ENCODE measurements at regions of chr1 and their contacts with region 1.

Region 1: DNA sequence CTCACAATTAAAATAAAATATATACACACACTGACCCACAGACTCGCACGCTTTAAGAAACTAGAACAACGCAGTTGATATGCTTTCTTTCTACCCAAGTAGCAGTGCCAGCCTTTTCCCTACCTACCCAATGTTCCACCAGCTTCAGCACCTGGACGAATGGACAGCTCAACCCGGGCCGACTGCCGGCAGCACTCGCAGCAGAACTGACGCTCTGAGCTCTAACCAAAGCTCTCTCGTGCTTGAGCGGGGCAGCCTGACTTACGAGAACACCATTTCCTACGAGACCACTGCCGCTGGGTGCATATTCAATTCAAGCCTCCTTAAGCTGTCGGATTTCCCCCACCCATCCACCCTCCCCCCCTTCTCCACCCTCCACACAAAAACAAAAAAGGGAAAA is 127.4 kb upstream of the DPYD start:
- DNase-seq: peak; percentile 79
- H3K4me3 Mint-ChIP-seq: no peak overlapping the region
- H3K27ac Mint-ChIP-seq: no peak overlapping the region
- H3K4me1 Mint-ChIP-seq: peaks cover 40% of the 10 kb centered on the region
- H3K27me3 Mint-ChIP-seq: peaks cover 88% of the 10 kb centered on the region

Region 2: GRCh38 chr1:97726383-97726782 is 321.9 kb before region 1 on chr1:
- CTCF ChIA-PET with region 1: no interaction called
- POLR2A ChIA-PET with region 1: interaction called, 12 read pairs
- DNase-seq: no peak
- H3K4me3 Mint-ChIP-seq: no peak overlapping the region
- H3K27ac Mint-ChIP-seq: no peak overlapping the region
- H3K4me1 Mint-ChIP-seq: no peaks in the 10 kb centered on the region
- H3K27me3 Mint-ChIP-seq: no peaks in the 10 kb centered on the region